Aorta (tissue), 5 donors: ENCODE measurements at regions of chr12 and their contacts with region 1.

Region 1: GRCh38 chr12:29944269-29945000 is 160.7 kb upstream of the TMTC1 start:
- DNase-seq: no peak
- ATAC-seq: no peak
- H3K4me3 ChIP-seq: no peak overlapping the region
- H3K27ac ChIP-seq: no peak overlapping the region
- H3K4me1 ChIP-seq: peaks cover 0 to 3% of the 10 kb centered on the region in 2 donors
- H3K27me3 ChIP-seq: no peaks in the 10 kb centered on the region

Region 2: DNA sequence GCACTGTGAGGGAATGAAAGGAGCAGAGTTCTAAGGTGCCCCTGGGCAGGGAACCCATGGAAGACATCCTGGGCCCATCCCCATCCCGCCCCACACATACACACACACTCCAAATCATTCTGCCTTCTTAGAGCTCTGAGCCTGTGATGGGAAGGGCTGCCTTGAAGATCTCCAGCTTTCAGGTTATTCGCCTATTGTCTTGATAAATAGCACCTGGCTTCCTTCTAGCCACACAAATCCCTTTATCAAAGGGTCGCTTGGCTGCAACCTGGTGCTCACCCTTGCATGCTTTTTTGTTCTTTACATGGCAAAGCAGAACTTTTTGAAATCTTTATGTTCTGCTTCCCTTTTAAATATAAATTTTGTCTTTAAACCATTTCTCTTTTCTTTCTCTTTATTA is 48.5 kb before region 1 on chr12:
- intact Hi-C with region 1: no loop called
- DNase-seq: no peak
- ATAC-seq: no peak
- H3K4me3 ChIP-seq: no peak overlapping the region
- H3K27ac ChIP-seq: no peak overlapping the region
- H3K4me1 ChIP-seq: peaks cover 0 to 2% of the 10 kb centered on the region in 2 donors
- H3K27me3 ChIP-seq: no peaks in the 10 kb centered on the region

Region 3: DNA sequence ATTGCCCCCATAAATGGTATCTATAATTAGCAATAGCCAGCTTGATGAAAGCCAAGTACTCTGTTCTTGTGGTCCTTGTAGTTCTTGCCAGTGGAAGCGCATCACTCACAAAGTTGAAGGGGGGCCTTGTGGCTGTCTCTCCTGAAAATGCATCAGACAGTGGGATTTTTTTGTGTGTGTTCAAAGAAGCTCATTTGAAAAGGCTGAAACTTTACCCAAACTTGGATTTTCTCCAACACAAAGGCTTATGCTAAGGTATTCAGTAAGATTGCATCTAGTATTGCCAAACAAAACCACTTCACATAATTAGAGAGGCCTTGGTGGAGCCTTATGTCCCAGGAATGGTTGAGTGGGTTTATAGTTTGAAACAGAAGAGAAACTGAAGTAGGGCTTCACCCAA is 56.0 kb after region 1 on chr12:
- intact Hi-C with region 1: loop called in 1 of 2 experiments (anchors 10 kb)
- DNase-seq: no peak
- ATAC-seq: no peak
- H3K4me3 ChIP-seq: no peak overlapping the region
- H3K27ac ChIP-seq: no peak overlapping the region
- H3K4me1 ChIP-seq: peaks cover under 1 to 3% of the 10 kb centered on the region in 2 donors
- H3K27me3 ChIP-seq: no peaks in the 10 kb centered on the region

Region 4: DNA sequence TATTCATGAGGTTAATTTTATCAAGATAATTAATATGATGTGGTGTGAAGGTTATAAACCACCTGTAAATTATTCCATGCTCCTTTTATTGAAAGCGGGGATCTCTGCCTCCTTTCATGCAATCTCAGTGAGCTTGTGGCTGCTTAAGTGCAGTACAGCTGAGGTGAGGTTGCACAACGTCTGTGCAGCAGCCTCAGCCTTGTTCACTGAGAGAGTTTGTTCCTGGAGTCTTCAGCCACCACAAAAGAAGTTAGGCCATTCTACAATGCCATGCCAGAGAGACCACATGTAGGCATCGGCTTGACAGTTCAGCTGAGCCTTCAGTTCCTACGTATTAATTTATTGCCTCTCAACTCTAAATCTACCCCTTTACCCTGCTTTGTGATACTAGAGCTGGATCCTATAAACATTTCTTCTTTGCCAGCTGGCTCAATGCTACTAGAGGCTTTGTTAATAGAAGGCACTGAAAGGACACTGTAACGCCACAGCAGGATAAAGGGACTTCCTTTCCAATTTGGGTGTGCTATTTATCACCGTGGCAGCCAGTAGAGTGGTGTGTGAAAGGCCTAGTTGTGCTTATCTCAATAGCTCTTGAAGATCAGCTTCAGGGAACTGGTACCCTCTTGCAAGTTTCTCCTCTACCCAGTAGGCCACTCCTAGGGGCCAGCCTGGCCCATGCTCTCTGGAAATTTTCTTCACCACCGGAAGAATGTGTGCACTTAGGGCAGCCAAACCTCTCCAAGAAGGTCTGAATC is 413.5 kb after region 1 on chr12:
- intact Hi-C with region 1: no loop called
- DNase-seq: no peak
- ATAC-seq: no peak
- H3K4me3 ChIP-seq: no peak overlapping the region
- H3K27ac ChIP-seq: no peak overlapping the region
- H3K4me1 ChIP-seq: no peaks in the 10 kb centered on the region
- H3K27me3 ChIP-seq: no peaks in the 10 kb centered on the region